Cardiac septum (tissue), 1 donor: ENCODE measurements at regions of chr19 and their contacts with region 1.

Region 1: GRCh38 chr19:20051841-20052768 is 12.8 kb upstream of the ZNF682 start:
- DNase-seq: peak; percentile 96

Region 2: GRCh38 chr19:20028611-20029010 is 23.5 kb before region 1 on chr19:
- intact Hi-C with region 1: no loop called
- DNase-seq: no peak

Region 3: GRCh38 chr19:20039203-20039723 is 12.8 kb before region 1 on chr19 and contains the start of gene ZNF682:
- intact Hi-C with region 1: loop called (anchors 1 kb)
- DNase-seq: peak; percentile 93
- total RNA-seq, gene ZNF682: 2.9 TPM